Activated CD4-positive, alpha-beta T cell treated with anti-CD3 and anti-CD28 coated beads for 36 hours (primary cell): ENCODE measurements at regions of chr1 and their contacts with region 1.

Region 1: DNA sequence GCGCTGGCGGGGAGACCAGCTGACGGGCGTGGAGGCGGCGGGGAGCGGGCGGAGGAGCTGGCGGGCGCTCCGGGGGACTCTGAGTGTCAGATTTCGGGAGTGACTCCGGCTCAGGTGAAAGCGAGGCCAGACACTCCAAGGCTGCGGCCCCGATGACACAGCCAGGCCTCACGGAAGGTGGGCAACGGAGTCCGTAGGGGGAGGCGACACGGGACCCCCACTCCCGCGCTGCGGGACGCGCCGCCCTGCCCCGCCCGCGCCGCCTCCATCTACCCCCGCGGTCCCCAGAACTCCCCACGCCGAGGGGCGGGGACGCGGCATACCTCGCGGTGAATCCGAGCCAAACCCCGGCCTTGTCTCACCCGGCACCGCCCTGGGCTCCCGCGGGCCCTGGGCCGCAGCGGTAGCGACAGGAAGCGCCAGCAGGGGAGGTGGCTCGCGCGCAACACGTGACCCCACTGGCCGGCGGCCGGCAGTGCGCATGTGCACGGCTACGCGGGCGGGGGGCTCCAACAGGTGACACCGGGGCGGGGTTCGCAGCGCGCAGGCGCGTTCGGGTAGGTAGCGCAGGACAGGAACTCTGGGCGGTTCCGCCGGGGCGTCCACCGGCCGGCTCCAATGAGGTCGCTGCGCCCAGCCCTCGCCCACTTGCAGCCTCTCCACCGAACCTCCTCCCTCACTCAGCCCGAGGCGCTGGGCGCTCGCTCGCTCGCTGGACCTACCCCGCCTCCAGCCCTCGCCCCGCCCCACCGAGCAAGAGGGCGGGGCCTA is at the start of gene CC2D1B:
- DNase-seq: peak; percentile 99
- ATAC-seq: peak; percentile 94
- H3K4me3 Mint-ChIP-seq: peak within 1 kb of the TSS; percentile 94
- H3K27ac Mint-ChIP-seq: peak within 1 kb of the TSS; percentile 93
- H3K4me1 Mint-ChIP-seq: peaks cover 44% of the 10 kb centered on the region
- H3K27me3 Mint-ChIP-seq: no peaks in the 10 kb centered on the region
- total RNA-seq, gene CC2D1B: 22.6 to 25.3 TPM

Region 2: GRCh38 chr1:51729156-51729823 is 636.6 kb before region 1 on chr1:
- CTCF ChIA-PET with region 1: no interaction called
- POLR2A ChIA-PET with region 1: no interaction called
- intact Hi-C with region 1: loop called in 1 of 2 experiments (anchors 5 kb)
- DNase-seq: peak; percentile 97
- ATAC-seq: peak; percentile 97
- H3K4me3 Mint-ChIP-seq: peak overlapping the region; percentile 84
- H3K27ac Mint-ChIP-seq: peak overlapping the region; percentile 83
- H3K4me1 Mint-ChIP-seq: peaks cover 40% of the 10 kb centered on the region
- H3K27me3 Mint-ChIP-seq: no peaks in the 10 kb centered on the region

Region 3: DNA sequence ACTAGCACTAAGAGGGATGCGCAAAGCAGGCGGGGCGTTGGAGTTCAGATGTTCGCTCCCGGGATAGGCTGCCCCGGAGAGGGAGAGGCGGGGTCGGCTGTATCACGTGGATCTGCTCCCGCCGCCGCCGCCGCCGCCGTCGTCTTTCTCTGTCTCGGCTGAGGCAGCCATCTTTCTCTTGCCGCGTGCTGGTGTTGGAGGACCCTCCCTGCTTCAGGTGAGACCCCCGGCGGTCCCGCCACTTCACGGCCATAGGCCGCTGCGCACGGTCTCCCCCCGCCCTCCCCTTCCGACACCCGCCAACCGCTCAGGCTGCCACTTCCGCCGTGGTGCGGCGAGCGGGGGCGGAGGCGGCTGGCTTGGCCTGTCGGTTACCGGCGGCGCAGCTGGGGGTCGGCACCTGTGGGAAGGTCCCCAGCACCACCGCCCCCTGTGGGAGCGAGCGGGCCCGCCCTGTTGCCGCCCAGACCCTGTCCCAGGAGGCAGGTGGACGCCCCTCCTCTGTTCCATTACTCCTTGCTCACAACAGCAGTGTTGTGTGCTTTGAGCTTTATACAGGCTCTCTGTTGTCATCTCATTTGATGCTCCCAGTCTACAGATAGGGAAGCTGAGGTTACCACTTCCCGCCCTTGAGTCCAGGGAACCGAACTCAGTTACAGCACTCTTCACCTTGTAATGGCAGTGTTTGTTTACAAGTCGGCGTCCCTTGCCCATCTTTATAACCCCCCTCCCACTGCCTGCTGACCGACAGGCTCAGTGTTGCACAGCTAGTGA is 309.6 kb before region 1 on chr1 and contains the start of gene BTF3L4:
- CTCF ChIA-PET with region 1: no interaction called
- POLR2A ChIA-PET with region 1: interaction called, 8 read pairs
- intact Hi-C with region 1: loop called in 1 of 2 experiments (anchors 1 kb)
- DNase-seq: peak; percentile 98
- ATAC-seq: peak; percentile 96
- H3K4me3 Mint-ChIP-seq: peak within 1 kb of the TSS; percentile 91
- H3K27ac Mint-ChIP-seq: peak within 1 kb of the TSS; percentile 99
- H3K4me1 Mint-ChIP-seq: peaks cover 40% of the 10 kb centered on the region
- H3K27me3 Mint-ChIP-seq: no peaks in the 10 kb centered on the region
- total RNA-seq, gene BTF3L4: 33.8 to 37.8 TPM

Region 4: GRCh38 chr1:52385376-52385775 is 19.4 kb after region 1 on chr1:
- CTCF ChIA-PET with region 1: no interaction called
- POLR2A ChIA-PET with region 1: no interaction called
- intact Hi-C with region 1: no loop called
- DNase-seq: no peak
- ATAC-seq: no peak
- H3K4me3 Mint-ChIP-seq: no peak overlapping the region
- H3K27ac Mint-ChIP-seq: no peak overlapping the region
- H3K4me1 Mint-ChIP-seq: no peaks in the 10 kb centered on the region
- H3K27me3 Mint-ChIP-seq: no peaks in the 10 kb centered on the region

Region 5: GRCh38 chr1:52552505-52553361 is 186.8 kb after region 1 on chr1 and contains the start of gene TUT4:
- CTCF ChIA-PET with region 1: no interaction called
- POLR2A ChIA-PET with region 1: no interaction called
- intact Hi-C with region 1: loop called (anchors 1 kb)
- DNase-seq: peak; percentile 90
- ATAC-seq: peak; percentile 57
- H3K4me3 Mint-ChIP-seq: no peak within 1 kb of the TSS
- H3K27ac Mint-ChIP-seq: peak within 1 kb of the TSS; percentile 84
- H3K4me1 Mint-ChIP-seq: peaks cover 34% of the 10 kb centered on the region
- H3K27me3 Mint-ChIP-seq: no peaks in the 10 kb centered on the region
- total RNA-seq, gene TUT4: 61.6 to 71.7 TPM

Region 6: GRCh38 chr1:52683367-52683940 is 317.5 kb after region 1 on chr1:
- CTCF ChIA-PET with region 1: interaction called, 9 read pairs
- POLR2A ChIA-PET with region 1: interaction called, 3 read pairs
- intact Hi-C with region 1: loop called in 1 of 2 experiments (anchors 1 kb)
- DNase-seq: no peak
- ATAC-seq: peak; percentile 37
- H3K4me3 Mint-ChIP-seq: no peak overlapping the region
- H3K27ac Mint-ChIP-seq: no peak overlapping the region
- H3K4me1 Mint-ChIP-seq: peaks cover 8% of the 10 kb centered on the region
- H3K27me3 Mint-ChIP-seq: no peaks in the 10 kb centered on the region

Region 7: GRCh38 chr1:52842643-52843309 is 476.8 kb after region 1 on chr1 and contains the start of gene ZYG11A:
- CTCF ChIA-PET with region 1: no interaction called
- POLR2A ChIA-PET with region 1: no interaction called
- intact Hi-C with region 1: loop called in 1 of 2 experiments (anchors 5 kb)
- DNase-seq: peak; percentile 89
- ATAC-seq: peak; percentile 98
- H3K4me3 Mint-ChIP-seq: peak within 1 kb of the TSS; percentile 58
- H3K27ac Mint-ChIP-seq: no peak within 1 kb of the TSS
- H3K4me1 Mint-ChIP-seq: peaks cover 5% of the 10 kb centered on the region
- H3K27me3 Mint-ChIP-seq: peaks cover 18% of the 10 kb centered on the region
- total RNA-seq, gene ZYG11A: 0.11 to 0.25 TPM